Cardiac septum (tissue), 1 donor: ENCODE measurements at regions of chr10 and their contacts with region 1.

Region 1: DNA sequence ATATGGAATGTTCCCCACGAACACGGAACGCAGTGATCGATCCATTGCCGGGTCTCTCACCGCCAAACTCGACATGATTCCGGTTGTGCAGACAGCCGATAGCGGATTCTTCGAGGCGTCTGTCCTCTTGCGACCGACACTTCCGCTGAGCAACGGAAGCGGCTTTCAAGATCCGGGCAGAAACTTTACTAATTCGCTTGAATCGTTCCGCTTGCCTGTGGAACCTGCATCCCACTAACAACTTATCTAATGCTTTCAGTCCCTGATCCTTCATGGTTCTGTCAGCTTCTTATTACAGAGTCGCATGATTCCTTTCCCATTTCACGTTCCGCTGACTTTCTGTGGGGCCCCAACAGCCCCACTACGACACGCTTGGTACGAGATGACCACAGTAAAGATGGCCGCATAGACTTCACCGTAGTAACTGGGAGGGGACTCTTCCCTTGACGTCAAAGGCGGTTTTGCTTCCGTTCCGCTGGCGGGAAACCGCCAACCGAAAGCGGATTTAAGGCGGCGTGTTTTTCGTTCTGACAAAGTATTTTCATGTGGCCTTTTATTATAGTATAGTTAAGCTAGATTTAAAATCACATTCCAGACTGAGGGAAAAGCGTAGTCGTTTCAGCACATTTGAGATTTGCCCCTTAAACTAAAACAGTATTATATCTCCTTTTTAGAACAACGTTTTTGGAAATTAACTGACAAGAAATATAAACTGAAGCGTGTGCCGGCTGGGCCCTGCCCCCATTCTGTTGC is at the start of gene CSTF2T:
- DNase-seq: peak; percentile 93
- total RNA-seq, gene CSTF2T: 20.4 TPM

Region 2: DNA sequence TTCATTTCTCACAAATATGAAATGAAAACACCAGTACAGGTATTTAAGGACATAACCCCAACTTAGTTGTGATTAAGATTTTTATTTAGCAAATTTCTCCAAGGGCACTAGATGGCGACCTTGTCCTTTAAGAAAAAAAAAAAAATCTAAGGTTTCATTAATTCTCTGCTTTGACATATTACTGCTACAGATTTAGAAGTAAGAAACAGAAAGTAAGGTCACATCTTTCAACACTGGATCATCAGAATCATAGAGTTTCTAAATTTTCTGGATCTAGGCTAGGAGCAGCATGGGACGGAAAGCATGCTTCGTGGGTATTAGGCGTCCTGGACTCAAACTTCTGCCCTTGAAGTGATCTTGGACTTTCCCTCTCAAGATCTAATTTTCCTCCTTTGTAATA is 710.9 kb before region 1 on chr10:
- intact Hi-C with region 1: loop called (anchors 10 kb)
- DNase-seq: no peak

Region 3: DNA sequence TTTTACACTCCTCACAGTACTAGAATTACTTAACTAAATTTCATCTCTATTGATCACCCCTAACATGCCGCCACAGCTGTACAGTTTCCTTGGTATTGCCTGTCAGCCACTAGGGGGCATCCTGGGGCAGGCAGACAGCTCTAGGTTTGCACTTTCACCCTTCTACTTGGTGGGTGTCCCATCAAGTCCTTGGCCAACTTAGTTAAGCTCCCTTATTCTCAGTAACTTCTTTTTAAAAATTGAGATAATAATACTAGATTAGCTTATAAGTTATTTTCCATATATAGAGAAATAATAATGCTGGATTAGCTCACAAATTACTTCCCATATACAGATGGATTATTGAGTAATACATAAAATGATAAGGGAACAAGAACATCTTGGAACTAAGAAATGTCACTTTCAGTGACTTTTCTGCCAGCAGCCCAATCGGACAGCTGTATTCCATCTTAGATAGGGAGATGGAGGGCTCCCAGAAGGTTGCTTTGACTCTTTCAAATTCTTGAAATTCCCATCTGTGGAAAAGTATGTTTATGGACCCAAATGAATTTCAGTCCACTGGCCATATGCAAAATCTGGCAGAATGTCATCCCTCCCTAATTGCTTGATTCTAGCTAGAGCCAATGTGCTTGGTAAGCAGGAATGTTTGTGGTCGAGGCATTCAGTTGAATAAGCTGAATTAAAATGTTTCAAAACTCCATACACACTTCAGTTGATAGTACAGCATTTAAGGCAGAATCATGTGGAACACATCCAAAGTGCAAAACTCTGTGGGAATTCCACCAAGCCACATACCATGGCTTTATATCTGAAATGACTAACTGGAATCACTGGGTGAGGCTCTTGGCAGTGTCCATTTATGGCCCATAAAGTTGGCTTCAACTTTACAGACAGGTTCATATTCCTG is 310.0 kb before region 1 on chr10:
- intact Hi-C with region 1: loop called (anchors 10 kb)
- DNase-seq: no peak

Region 4: GRCh38 chr10:51886438-51887068 is 186.9 kb after region 1 on chr10:
- intact Hi-C with region 1: loop called (anchors 10 kb)
- DNase-seq: no peak

Region 5: GRCh38 chr10:51950371-51950995 is 250.8 kb after region 1 on chr10:
- intact Hi-C with region 1: loop called (anchors 10 kb)
- DNase-seq: no peak